GM12878 (cell line): ENCODE measurements at regions of chr6 and their contacts with region 1.

Region 1: GRCh38 chr6:100176311-100176950 is 182.4 kb upstream of the MCHR2 start:
- DNase-seq: no peak
- ATAC-seq: peak; percentile 49
- H3K4me3 ChIP-seq: no peak overlapping the region
- H3K27ac ChIP-seq: no peak overlapping the region
- H3K4me1 ChIP-seq: no peaks in the 10 kb centered on the region
- H3K27me3 ChIP-seq: no peaks in the 10 kb centered on the region
- CTCF ChIP-seq: peak in 2 of 3 experiments; percentile 23 to 29; a peak in 1 of 6 replicates
- EP300 ChIP-seq: no peak
- POLR2A ChIP-seq: no peak
- RAD21 ChIP-seq: peak; percentile 29; the same call in 1 of the 2 replicates

Region 2: GRCh38 chr6:100126790-100127484 is 49.5 kb before region 1 on chr6:
- CTCF ChIA-PET with region 1: interaction called, 4 read pairs
- POLR2A ChIA-PET with region 1: interaction called, 3 read pairs
- RAD21 ChIA-PET with region 1: interaction called, 7 read pairs
- SMC1A ChIA-PET with region 1: interaction called, 10 read pairs
- in situ Hi-C with region 1: no loop called
- intact Hi-C with region 1: loop called (anchors 5 kb)
- DNase-seq: no peak
- ATAC-seq: peak; percentile 94
- H3K4me3 ChIP-seq: no peak overlapping the region
- H3K27ac ChIP-seq: no peak overlapping the region
- H3K4me1 ChIP-seq: no peaks in the 10 kb centered on the region
- H3K27me3 ChIP-seq: no peaks in the 10 kb centered on the region
- CTCF ChIP-seq: no peak
- EP300 ChIP-seq: peak; percentile 46 to 73; a peak in 3 of 4 replicates
- POLR2A ChIP-seq: no peak
- RAD21 ChIP-seq: no peak

Region 3: DNA sequence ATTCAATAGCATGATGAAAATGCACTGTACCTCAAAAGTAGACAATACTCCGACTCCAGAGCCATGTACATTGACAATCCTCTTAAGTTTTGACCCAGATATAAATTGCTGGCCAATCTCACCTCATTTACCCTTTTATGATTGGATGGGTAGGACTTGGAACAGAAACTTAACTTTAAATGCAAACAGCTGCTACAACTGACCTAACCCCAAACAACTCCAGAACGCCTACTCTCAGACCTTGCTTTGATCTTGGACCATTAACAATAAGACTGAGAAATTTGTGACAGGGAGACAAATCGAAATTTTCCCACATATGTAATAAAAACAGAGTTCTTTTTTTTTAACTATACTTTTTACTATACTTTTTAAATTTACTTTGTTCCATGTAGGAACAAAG is 18.1 kb after region 1 on chr6:
- CTCF ChIA-PET with region 1: interaction called, 7 read pairs
- POLR2A ChIA-PET with region 1: interaction called, 3 read pairs
- RAD21 ChIA-PET with region 1: no interaction called
- SMC1A ChIA-PET with region 1: interaction called, 23 read pairs
- in situ Hi-C with region 1: no loop called
- intact Hi-C with region 1: no loop called
- DNase-seq: no peak
- ATAC-seq: peak; percentile 87
- H3K4me3 ChIP-seq: no peak overlapping the region
- H3K27ac ChIP-seq: no peak overlapping the region
- H3K4me1 ChIP-seq: no peaks in the 10 kb centered on the region
- H3K27me3 ChIP-seq: no peaks in the 10 kb centered on the region; a peak in 1 of 4 replicates
- CTCF ChIP-seq: no peak
- EP300 ChIP-seq: no peak
- POLR2A ChIP-seq: no peak
- RAD21 ChIP-seq: no peak

Region 4: GRCh38 chr6:100257793-100258395 is 81.5 kb after region 1 on chr6:
- CTCF ChIA-PET with region 1: interaction called, 7 read pairs
- POLR2A ChIA-PET with region 1: no interaction called
- RAD21 ChIA-PET with region 1: interaction called, 15 read pairs
- SMC1A ChIA-PET with region 1: interaction called, 11 read pairs
- in situ Hi-C with region 1: no loop called
- intact Hi-C with region 1: no loop called
- DNase-seq: peak; percentile 11
- ATAC-seq: peak; percentile 85
- H3K4me3 ChIP-seq: no peak overlapping the region
- H3K27ac ChIP-seq: no peak overlapping the region
- H3K4me1 ChIP-seq: no peaks in the 10 kb centered on the region
- H3K27me3 ChIP-seq: no peaks in the 10 kb centered on the region
- CTCF ChIP-seq: peak in 1 of 3 experiments; percentile 22; a peak in 2 of 6 replicates
- EP300 ChIP-seq: no peak
- POLR2A ChIP-seq: no peak
- RAD21 ChIP-seq: no peak

Region 5: DNA sequence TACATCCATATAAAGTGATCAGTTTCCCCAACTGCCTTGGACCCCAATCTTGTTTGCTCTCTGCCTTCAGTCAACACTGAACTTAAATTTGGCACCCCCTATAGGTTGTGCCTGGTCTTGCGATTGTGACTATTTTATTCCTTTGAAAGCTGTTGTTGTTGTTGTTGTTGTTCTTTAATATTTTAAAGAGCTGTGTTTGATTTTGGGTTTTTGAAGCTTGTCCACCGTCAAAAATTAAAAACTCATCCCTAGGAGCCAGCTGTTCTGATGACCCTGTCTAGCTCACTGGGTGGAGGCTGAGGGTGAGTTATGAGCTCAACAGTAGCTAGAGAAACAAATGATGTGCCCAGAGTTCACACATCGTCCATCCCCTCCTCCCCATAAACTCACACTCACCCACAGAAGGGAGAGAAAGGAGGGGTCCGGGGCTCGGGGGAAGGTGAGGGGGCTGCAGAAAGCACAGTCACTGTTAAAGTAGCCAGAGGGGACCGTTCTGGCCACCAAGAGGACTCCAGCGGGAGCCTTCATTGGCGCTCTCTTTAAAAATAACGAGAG is 284.3 kb after region 1 on chr6:
- CTCF ChIA-PET with region 1: interaction called, 12 read pairs
- POLR2A ChIA-PET with region 1: no interaction called
- RAD21 ChIA-PET with region 1: no interaction called
- SMC1A ChIA-PET with region 1: interaction called, 4 read pairs
- in situ Hi-C with region 1: no loop called
- intact Hi-C with region 1: no loop called
- DNase-seq: no peak
- ATAC-seq: peak; percentile 35; the same call in 2 of the 3 replicates
- H3K4me3 ChIP-seq: no peak overlapping the region
- H3K27ac ChIP-seq: no peak overlapping the region
- H3K4me1 ChIP-seq: no peaks in the 10 kb centered on the region
- H3K27me3 ChIP-seq: peaks cover 26 to 61% of the 10 kb centered on the region in 2 experiments
- CTCF ChIP-seq: peak; percentile 17 to 39 (median 25); a peak in 5 of 6 replicates
- EP300 ChIP-seq: no peak
- POLR2A ChIP-seq: no peak
- RAD21 ChIP-seq: 0 out of 2 replicates have a peak, but pooled peaks have one; percentile 12

Region 6: DNA sequence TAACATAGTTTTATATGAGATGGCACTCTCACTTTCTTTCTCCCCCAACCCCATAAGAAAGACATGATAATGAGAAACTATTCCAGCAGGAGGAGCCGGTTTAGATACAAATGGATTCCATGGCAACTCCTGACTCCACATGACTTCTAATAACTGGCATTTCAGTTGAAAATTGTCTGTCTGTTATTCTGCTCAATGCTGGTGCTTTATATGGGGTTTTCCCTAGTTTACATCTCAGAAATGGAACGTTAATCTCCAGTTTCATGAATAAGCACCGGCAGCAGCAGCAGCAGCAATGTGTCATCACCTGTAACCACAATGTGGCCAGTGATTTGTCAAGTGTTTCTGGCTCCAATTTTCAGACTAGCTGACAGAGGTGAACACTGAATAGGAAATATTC is 296.2 kb after region 1 on chr6:
- CTCF ChIA-PET with region 1: interaction called, 7 read pairs
- POLR2A ChIA-PET with region 1: no interaction called
- RAD21 ChIA-PET with region 1: interaction called, 7 read pairs
- SMC1A ChIA-PET with region 1: interaction called, 16 read pairs
- in situ Hi-C with region 1: no loop called
- intact Hi-C with region 1: no loop called
- DNase-seq: peak; percentile 42
- ATAC-seq: peak; percentile 86
- H3K4me3 ChIP-seq: no peak overlapping the region
- H3K27ac ChIP-seq: no peak overlapping the region
- H3K4me1 ChIP-seq: peaks cover 16% of the 10 kb centered on the region
- H3K27me3 ChIP-seq: peaks cover 2 to 9% of the 10 kb centered on the region in 2 experiments; a peak in 3 of 4 replicates
- CTCF ChIP-seq: no peak
- EP300 ChIP-seq: peak in 1 of 2 experiments; percentile 77; a peak in 2 of 4 replicates
- POLR2A ChIP-seq: no peak
- RAD21 ChIP-seq: no peak

Region 7: GRCh38 chr6:100479179-100480035 is 303.0 kb after region 1 on chr6:
- CTCF ChIA-PET with region 1: interaction called, 15 read pairs
- POLR2A ChIA-PET with region 1: no interaction called
- RAD21 ChIA-PET with region 1: interaction called, 10 read pairs
- SMC1A ChIA-PET with region 1: interaction called, 16 read pairs
- in situ Hi-C with region 1: no loop called
- intact Hi-C with region 1: loop called (anchors 2 kb)
- DNase-seq: peak; percentile 34
- ATAC-seq: peak; percentile 73
- H3K4me3 ChIP-seq: no peak overlapping the region
- H3K27ac ChIP-seq: no peak overlapping the region
- H3K4me1 ChIP-seq: peaks cover 7% of the 10 kb centered on the region
- H3K27me3 ChIP-seq: no peaks in the 10 kb centered on the region
- CTCF ChIP-seq: peak; percentile 63 to 80 (median 76)
- EP300 ChIP-seq: no peak
- POLR2A ChIP-seq: no peak
- RAD21 ChIP-seq: peak; percentile 95